ENCODE measurements at regions of chr19 and their contacts with region 1.

Region 1: DNA sequence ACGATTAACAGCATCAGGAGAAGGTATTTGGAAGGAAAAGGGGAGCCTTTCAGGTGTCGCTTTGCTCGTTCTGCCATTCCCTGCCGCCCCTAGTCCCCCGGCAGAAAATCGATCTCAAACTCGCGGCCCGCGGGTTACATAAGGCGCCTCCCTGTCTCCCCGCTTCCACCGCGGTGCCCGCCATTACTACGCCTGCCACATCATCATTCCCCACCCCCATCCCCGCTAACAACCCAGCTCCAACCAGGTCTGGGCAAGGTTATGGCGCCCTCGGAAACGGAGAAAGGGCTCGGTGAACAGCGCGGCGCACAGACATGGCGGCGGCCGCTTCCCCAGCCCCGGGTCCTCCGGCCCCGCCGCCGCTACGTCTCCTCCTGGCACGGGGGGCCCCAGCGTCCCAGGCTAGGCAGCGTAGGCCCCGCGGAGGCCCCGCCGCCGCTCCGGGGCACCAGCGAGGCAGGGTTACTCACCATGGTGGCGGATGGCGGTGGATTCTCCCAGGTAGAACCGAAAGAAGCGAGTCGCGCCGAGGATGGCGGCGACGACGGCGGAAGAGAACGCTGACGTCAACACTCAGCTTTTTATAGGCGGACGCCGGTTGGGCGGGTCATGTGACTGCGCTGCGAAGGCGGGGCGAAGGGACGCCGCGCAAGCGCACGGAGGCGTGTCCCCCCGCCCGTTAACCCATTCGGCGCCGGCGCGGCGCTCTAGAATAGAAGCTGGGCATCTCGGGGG is at the start of gene EEF2:
- DNase-seq: peak; percentile 84 to 93
- H3K4me3 ChIP-seq: peak within 1 kb of the TSS; percentile 75 to 89
- H3K27ac ChIP-seq: peak within 1 kb of the TSS; percentile 91 to 94
- H3K4me1 ChIP-seq: peaks cover 0 to 57% (median 43%) of the 10 kb centered on the region in 4 donors
- H3K27me3 ChIP-seq: no peaks in the 10 kb centered on the region
- CTCF ChIP-seq: no peak

Region 2: GRCh38 chr19:3710265-3710812 is 274.7 kb before region 1 on chr19:
- intact Hi-C with region 1: no loop called
- DNase-seq: peak; percentile 75 to 77
- H3K4me3 ChIP-seq: no peak overlapping the region
- H3K27ac ChIP-seq: no peak overlapping the region
- H3K4me1 ChIP-seq: no peaks in the 10 kb centered on the region
- H3K27me3 ChIP-seq: peaks cover 0 to 39% of the 10 kb centered on the region in 2 donors
- CTCF ChIP-seq: no peak

Region 3: DNA sequence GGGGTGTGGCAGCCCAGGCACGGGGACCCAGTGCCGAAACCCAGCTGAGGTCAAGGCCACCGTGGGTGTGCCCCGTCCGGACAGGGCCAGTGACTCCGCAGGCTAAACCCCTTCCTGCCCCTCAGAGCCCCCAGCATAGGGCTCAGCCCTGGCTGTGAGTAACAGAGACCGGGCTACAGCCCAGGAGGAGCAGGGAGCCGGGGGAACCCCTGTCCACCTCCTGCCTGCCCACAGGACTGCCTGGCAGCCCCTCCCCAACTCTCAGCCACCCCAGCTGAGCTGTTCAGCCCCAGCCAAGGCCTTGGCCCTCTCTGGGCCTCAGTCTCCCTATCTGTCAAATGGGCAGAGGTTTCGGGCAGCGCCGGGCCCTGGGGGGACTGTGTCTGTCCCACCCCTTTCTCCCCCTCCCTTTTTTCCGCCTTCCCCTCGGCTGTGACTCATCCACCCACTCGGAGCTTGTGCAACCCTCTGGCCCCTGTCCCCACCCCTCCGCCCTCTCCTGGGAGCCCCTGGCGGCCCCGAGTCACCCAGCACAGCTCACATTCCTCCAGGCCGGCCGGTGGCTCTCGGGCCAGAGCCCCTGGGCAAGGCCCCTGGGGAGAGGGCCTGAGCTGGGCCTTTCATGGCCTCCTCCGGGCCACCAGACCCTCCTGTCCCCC is 73.1 kb after region 1 on chr19:
- intact Hi-C with region 1: loop called (anchors 5 kb)
- DNase-seq: peak; percentile 92 to 98
- H3K4me3 ChIP-seq: peak overlapping the region; percentile 37 to 98
- H3K27ac ChIP-seq: peak overlapping the region; percentile 99
- H3K4me1 ChIP-seq: peaks cover 10 to 69% (median 62%) of the 10 kb centered on the region in 4 donors
- H3K27me3 ChIP-seq: no peaks in the 10 kb centered on the region
- CTCF ChIP-seq: peak; percentile 18 to 28

Region 4: GRCh38 chr19:4123615-4124568 is 138.8 kb after region 1 on chr19 and contains the start of gene MAP2K2:
- intact Hi-C with region 1: loop called (anchors 10 kb)
- DNase-seq: peak; percentile 87 to 97
- H3K4me3 ChIP-seq: peak within 1 kb of the TSS; percentile 94 to 99
- H3K27ac ChIP-seq: peak within 1 kb of the TSS; percentile 61 to 73
- H3K4me1 ChIP-seq: peaks cover 0 to 39% (median 31%) of the 10 kb centered on the region in 4 donors
- H3K27me3 ChIP-seq: no peaks in the 10 kb centered on the region
- CTCF ChIP-seq: peak in 1 of 2 experiments; percentile 38

Region 5: GRCh38 chr19:4182084-4182810 is 197.2 kb after region 1 on chr19 and contains the starts of genes ANKRD24 and SIRT6:
- intact Hi-C with region 1: loop called (anchors 10 kb)
- DNase-seq: peak; percentile 93 to 97
- H3K4me3 ChIP-seq: peak within 1 kb of the TSS; percentile 62 to 77
- H3K27ac ChIP-seq: peak within 1 kb of the TSS; percentile 76
- H3K4me1 ChIP-seq: peaks cover 0 to 31% (median 21%) of the 10 kb centered on the region in 4 donors
- H3K27me3 ChIP-seq: peaks cover 0 to 5% of the 10 kb centered on the region in 2 donors
- CTCF ChIP-seq: no peak

Measured in tibial artery (tissue), 4 donors.